ENCODE measurements at regions of chr14 and their contacts with region 1.

Region 1: DNA sequence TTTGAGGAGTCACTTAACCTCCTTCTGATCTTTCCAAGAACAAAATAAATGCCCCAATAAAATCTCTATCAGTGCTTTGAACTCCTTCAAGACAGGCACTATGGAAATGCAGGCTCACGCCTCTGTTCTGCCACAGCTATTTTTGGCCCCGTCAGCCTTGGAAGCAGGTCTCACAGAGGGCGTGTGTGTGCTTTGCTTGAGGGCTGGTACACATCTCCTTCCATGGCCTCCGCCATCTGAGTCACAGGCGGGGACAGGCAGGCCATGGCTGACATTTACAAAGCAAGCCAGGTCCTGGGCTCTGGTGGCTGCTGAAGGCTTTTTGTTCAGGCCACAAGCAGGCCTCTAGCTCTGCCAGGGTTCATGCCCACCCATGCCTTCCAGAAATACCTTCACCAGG is 16.0 kb downstream of the PRIMA1 start:
- DNase-seq: peak; percentile 17 to 83
- H3K4me3 ChIP-seq: no peak overlapping the region
- H3K27ac ChIP-seq: peak overlapping the region; percentile 54 to 64
- H3K4me1 ChIP-seq: peaks cover 0 to 3% of the 10 kb centered on the region in 2 donors
- H3K27me3 ChIP-seq: no peaks in the 10 kb centered on the region
- CTCF ChIP-seq: no peak

Region 2: GRCh38 chr14:93759719-93760307 is 12.4 kb before region 1 on chr14:
- intact Hi-C with region 1: loop called (anchors 1 kb)
- DNase-seq: peak in 1 of 2 donors; percentile 84
- H3K4me3 ChIP-seq: peak overlapping the region in 1 of 2 donors; percentile 25
- H3K27ac ChIP-seq: peak overlapping the region; percentile 22 to 30
- H3K4me1 ChIP-seq: peaks cover 15 to 19% of the 10 kb centered on the region in 2 donors
- H3K27me3 ChIP-seq: no peaks in the 10 kb centered on the region
- CTCF ChIP-seq: no peak